ENCODE measurements at regions of chr12 and their contacts with region 1.

Region 1: DNA sequence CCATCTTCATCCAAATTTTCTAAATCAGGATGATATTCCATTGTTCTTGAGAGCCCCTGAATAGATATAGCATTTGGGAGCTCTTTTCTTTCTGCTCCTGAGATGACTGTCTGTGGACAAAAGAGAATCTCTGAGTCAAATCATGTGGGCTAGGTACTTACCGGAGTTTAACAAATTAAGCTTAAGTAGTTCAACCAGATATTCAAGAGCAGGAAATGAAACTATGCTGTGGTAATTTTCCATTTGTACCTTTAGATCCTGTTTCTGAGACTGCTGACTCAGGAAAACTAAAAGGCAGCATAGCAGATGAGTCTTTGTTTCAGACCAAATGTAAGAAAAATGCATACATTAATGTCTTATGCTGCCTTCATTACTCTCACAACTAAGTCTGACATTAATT is at the start of gene CLEC7A:
- DNase-seq: no peak
- H3K4me3 ChIP-seq: no peak within 1 kb of the TSS
- H3K27ac ChIP-seq: no peak within 1 kb of the TSS
- H3K4me1 ChIP-seq: no peaks in the 10 kb centered on the region
- H3K27me3 ChIP-seq: no peaks in the 10 kb centered on the region
- CTCF ChIP-seq: no peak
- EP300 ChIP-seq: no peak
- POLR2A ChIP-seq: no peak
- total RNA-seq, gene CLEC7A: 2.9 to 12.7 (median 3.7) TPM

Region 2: DNA sequence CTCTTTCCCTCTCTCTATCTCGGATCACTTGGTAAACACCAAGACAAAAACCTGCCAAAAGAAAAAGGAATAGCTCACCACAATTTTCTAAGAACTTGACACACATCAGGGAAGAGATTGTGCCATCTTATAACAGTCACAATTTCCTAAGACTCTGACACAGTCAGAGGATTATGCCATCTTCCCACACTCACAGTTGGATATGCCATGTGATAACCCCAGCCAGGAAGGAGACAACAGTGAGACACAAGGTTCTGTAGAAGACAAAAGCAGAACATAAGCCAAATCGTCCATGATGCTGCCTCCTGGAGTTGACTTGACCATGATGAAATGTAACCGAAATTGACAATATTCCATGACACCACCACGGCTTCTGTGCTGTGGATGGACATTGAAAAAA is 102.3 kb before region 1 on chr12:
- intact Hi-C with region 1: loop called in 3 of 4 experiments (anchors 5 to 10 kb)
- DNase-seq: no peak
- H3K4me3 ChIP-seq: no peak overlapping the region
- H3K27ac ChIP-seq: no peak overlapping the region
- H3K4me1 ChIP-seq: no peaks in the 10 kb centered on the region
- H3K27me3 ChIP-seq: no peaks in the 10 kb centered on the region
- CTCF ChIP-seq: no peak
- EP300 ChIP-seq: no peak
- POLR2A ChIP-seq: no peak

Region 3: GRCh38 chr12:10033783-10034545 is 96.1 kb before region 1 on chr12:
- intact Hi-C with region 1: loop called in 3 of 4 experiments (anchors 5 to 10 kb)
- DNase-seq: no peak
- H3K4me3 ChIP-seq: no peak overlapping the region
- H3K27ac ChIP-seq: no peak overlapping the region
- H3K4me1 ChIP-seq: no peaks in the 10 kb centered on the region
- H3K27me3 ChIP-seq: no peaks in the 10 kb centered on the region
- CTCF ChIP-seq: peak in 2 of 3 donors; percentile 13 to 55
- EP300 ChIP-seq: no peak
- POLR2A ChIP-seq: no peak

Region 4: GRCh38 chr12:10075451-10075850 is 54.6 kb before region 1 on chr12:
- intact Hi-C with region 1: loop called in 1 of 4 experiments (anchors 10 kb)
- DNase-seq: no peak
- H3K4me3 ChIP-seq: no peak overlapping the region
- H3K27ac ChIP-seq: no peak overlapping the region
- H3K4me1 ChIP-seq: no peaks in the 10 kb centered on the region
- H3K27me3 ChIP-seq: no peaks in the 10 kb centered on the region
- CTCF ChIP-seq: no peak
- EP300 ChIP-seq: no peak
- POLR2A ChIP-seq: no peak

Region 5: GRCh38 chr12:10167588-10167987 is 37.5 kb after region 1 on chr12:
- intact Hi-C with region 1: no loop called
- DNase-seq: no peak
- H3K4me3 ChIP-seq: no peak overlapping the region
- H3K27ac ChIP-seq: no peak overlapping the region
- H3K4me1 ChIP-seq: no peaks in the 10 kb centered on the region
- H3K27me3 ChIP-seq: no peaks in the 10 kb centered on the region
- CTCF ChIP-seq: no peak
- EP300 ChIP-seq: no peak
- POLR2A ChIP-seq: no peak